Activated naive CD4-positive, alpha-beta T cell treated with anti-CD3 and anti-CD28 coated beads, Interleukin-2, amount 10 ng/mL, durations not matched to agents 7 days and 5 days (primary cell): ENCODE measurements at regions of chr5 and their contacts with region 1.

Region 1: GRCh38 chr5:30040488-30041118 is 1152.9 kb upstream of the CDH6 start:
- DNase-seq: no peak
- H3K4me3 Mint-ChIP-seq: no peak overlapping the region
- H3K27ac Mint-ChIP-seq: no peak overlapping the region
- H3K4me1 Mint-ChIP-seq: no peaks in the 10 kb centered on the region
- H3K27me3 Mint-ChIP-seq: no peaks in the 10 kb centered on the region

Region 2: GRCh38 chr5:30001826-30002225 is 38.8 kb before region 1 on chr5:
- CTCF ChIA-PET with region 1: no interaction called
- DNase-seq: no peak
- H3K4me3 Mint-ChIP-seq: no peak overlapping the region
- H3K27ac Mint-ChIP-seq: no peak overlapping the region
- H3K4me1 Mint-ChIP-seq: no peaks in the 10 kb centered on the region
- H3K27me3 Mint-ChIP-seq: no peaks in the 10 kb centered on the region

Region 3: DNA sequence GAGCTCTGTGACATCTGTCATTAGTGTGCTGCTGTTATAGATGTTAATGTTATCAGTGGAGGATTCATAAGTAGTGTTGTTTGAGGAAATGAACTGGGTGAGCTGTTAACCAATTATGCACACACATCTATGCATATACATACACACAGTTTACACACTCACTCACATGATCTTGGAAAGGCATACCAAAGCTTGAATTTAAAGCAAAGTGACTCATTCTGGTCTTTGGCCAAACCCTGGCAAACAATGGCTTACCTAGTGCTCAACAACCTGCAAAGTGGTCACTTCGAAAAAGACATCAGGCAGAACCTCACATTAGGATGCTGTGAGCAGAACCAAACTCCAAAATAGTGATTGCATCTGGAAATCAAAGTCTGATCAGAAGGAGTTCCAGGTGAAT is 115.6 kb after region 1 on chr5:
- CTCF ChIA-PET with region 1: no interaction called
- DNase-seq: no peak
- H3K4me3 Mint-ChIP-seq: no peak overlapping the region
- H3K27ac Mint-ChIP-seq: no peak overlapping the region
- H3K4me1 Mint-ChIP-seq: no peaks in the 10 kb centered on the region
- H3K27me3 Mint-ChIP-seq: no peaks in the 10 kb centered on the region

Region 4: GRCh38 chr5:31232273-31232888 is 1191.8 kb after region 1 on chr5:
- CTCF ChIA-PET with region 1: interaction called, 14 read pairs
- DNase-seq: no peak
- H3K4me3 Mint-ChIP-seq: no peak overlapping the region
- H3K27ac Mint-ChIP-seq: no peak overlapping the region
- H3K4me1 Mint-ChIP-seq: no peaks in the 10 kb centered on the region
- H3K27me3 Mint-ChIP-seq: no peaks in the 10 kb centered on the region